ENCODE measurements at regions of chr10 and their contacts with region 1.

Region 1: DNA sequence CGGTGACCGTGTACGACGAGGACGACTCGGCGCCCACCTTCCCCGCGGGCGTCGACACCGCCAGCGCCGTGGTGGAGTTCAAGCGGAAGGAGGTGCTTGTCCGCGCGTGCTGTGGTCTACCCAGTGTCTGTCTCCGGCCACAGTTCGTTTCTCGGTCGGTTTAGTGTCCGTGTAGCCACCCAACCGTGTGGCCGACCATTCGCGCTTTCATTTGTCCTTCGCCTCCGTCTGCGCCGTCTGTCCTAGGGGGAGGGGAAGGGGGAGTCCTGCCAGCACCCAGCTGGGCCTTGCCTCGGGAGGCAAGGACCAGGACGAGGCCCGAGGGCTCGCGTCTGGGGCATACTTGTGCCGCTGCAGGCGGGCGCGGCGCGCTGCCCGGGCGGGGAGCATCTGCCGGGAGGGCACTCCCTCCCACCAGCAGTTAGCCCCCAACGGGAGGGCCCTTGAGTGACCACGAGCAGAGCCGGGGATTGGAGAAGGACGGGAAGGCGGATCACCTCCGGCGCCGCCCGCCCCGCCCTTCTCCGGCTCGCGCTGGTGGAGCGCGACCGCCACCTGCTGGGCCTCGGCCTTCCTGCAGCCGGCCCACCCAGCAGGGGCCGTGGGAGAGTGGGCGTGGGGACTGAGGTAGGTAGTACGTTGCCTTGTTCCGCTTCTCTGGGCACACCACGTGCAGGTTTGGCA is 28.4 kb downstream of the RET start:
- DNase-seq: peak; percentile 59
- H3K4me3 ChIP-seq: peak overlapping the region; percentile 49 to 50 (median 49)
- H3K27ac ChIP-seq: no peak overlapping the region
- H3K4me1 ChIP-seq: peaks cover 9% of the 10 kb centered on the region
- H3K27me3 ChIP-seq: no peaks in the 10 kb centered on the region
- CTCF ChIP-seq: peak; percentile 85 to 100

Region 2: GRCh38 chr10:42782446-42783180 is 322.6 kb before region 1 on chr10 and contains the start of gene BMS1:
- CTCF ChIA-PET with region 1: no interaction called
- dilution Hi-C with region 1: no loop called
- in situ Hi-C with region 1: no loop called
- intact Hi-C with region 1: loop called (anchors 1 kb)
- DNase-seq: peak; percentile 94
- H3K4me3 ChIP-seq: peak within 1 kb of the TSS; percentile 55 to 84 (median 80)
- H3K27ac ChIP-seq: peak within 1 kb of the TSS; percentile 84
- H3K4me1 ChIP-seq: peaks cover 4% of the 10 kb centered on the region
- H3K27me3 ChIP-seq: no peaks in the 10 kb centered on the region
- CTCF ChIP-seq: no peak
- total RNA-seq, gene BMS1: 14.3 to 23.5 TPM